H1 (cell line): ENCODE measurements at regions of chr5 and their contacts with region 1.

Region 1: GRCh38 chr5:149834246-149834855 is 104.2 kb downstream of the PPARGC1B start:
- DNase-seq: peak; percentile 25 to 58
- H3K4me3 ChIP-seq: no peak overlapping the region
- H3K27ac ChIP-seq: no peak overlapping the region
- H3K4me1 ChIP-seq: no peaks in the 10 kb centered on the region
- H3K27me3 ChIP-seq: no peaks in the 10 kb centered on the region
- CTCF ChIP-seq: peak; percentile 35 to 91 (median 73)
- EP300 ChIP-seq: no peak
- POLR2A ChIP-seq: no peak
- RAD21 ChIP-seq: peak; percentile 79

Region 2: DNA sequence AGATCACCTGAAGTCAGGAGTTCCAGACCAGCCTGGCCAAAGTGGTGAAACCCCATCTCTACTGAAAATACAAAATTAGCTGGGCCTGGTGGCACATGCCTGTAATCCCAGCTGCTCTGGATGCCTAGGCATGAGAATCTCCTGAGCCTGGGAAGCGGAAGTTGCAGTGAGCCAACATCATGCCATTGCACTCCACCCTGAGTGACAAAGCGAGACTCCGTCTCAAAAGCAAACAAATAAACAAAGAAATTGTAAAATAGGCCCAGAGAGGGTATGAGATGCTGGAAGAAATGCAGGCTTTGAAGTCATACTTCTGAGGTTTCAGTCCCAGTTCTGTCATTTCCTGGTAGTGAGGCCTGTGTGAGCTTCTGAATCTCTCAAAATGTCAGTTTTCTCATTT is 258.3 kb before region 1 on chr5:
- CTCF ChIA-PET with region 1: no interaction called
- POLR2A ChIA-PET with region 1: no interaction called
- DNase-seq: no peak
- H3K4me3 ChIP-seq: no peak overlapping the region
- H3K27ac ChIP-seq: no peak overlapping the region
- H3K4me1 ChIP-seq: peaks cover 0 to 4% (median 1%) of the 10 kb centered on the region in 4 experiments; a peak in 3 of 7 replicates
- H3K27me3 ChIP-seq: peaks cover 0 to 10% (median 7%) of the 10 kb centered on the region in 4 experiments; a peak in 5 of 7 replicates
- CTCF ChIP-seq: no peak
- EP300 ChIP-seq: no peak
- POLR2A ChIP-seq: no peak
- RAD21 ChIP-seq: no peak

Region 3: GRCh38 chr5:149667084-149667828 is 167.1 kb before region 1 on chr5:
- CTCF ChIA-PET with region 1: interaction called, 11 read pairs
- POLR2A ChIA-PET with region 1: no interaction called
- DNase-seq: peak in 1 of 2 experiments; percentile 77
- H3K4me3 ChIP-seq: no peak overlapping the region
- H3K27ac ChIP-seq: no peak overlapping the region
- H3K4me1 ChIP-seq: no peaks in the 10 kb centered on the region
- H3K27me3 ChIP-seq: no peaks in the 10 kb centered on the region
- CTCF ChIP-seq: peak; percentile 62 to 87 (median 73)
- EP300 ChIP-seq: no peak
- POLR2A ChIP-seq: no peak
- RAD21 ChIP-seq: peak; percentile 64 to 77

Region 4: DNA sequence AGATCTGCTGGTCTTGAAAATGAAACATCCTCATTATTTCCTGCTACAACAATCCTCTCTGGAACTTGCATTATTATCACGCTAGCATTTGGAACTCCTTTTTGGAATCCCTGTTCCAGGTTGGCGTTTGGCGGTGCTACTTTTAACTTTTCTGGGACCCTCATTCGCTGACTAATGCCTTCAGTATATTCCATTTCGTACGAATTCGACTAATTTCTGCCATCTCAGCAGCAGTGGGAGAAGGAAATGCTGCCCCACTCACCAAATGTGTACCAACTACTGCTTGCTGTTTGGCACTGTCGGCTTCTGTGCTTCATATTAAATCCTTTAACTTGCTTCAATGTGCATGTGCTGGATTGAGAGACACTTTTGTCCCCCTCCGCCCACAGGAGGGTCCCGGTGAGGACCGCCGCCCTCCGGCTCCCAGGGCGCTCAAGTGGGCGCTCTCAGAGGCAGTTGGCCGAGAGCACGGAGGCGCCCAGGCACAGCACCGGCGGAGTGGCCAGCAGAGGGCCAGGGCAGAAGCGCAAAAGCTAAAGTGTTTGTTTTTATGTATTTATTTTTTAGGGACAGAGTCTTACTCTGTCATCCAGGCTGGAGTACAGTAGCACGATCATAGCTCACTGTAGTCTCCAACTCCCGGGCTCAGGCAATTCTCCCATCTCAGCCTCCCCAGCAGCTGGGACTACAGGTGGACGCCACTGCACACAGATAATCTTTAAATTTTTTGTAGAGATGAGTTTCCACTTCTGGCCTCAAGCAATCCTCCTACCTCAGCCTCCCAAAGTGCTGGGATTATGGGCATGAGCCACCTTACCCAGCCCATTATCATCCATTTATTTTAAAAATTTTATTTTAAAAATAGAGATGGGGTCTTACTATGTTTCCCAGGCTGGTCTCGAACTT is 98.3 kb after region 1 on chr5:
- CTCF ChIA-PET with region 1: interaction called, 12 read pairs
- POLR2A ChIA-PET with region 1: no interaction called
- DNase-seq: peak in 1 of 2 experiments; percentile 72
- H3K4me3 ChIP-seq: no peak overlapping the region
- H3K27ac ChIP-seq: no peak overlapping the region
- H3K4me1 ChIP-seq: peaks cover 0 to 3% (median 0%) of the 10 kb centered on the region in 4 experiments; a peak in 1 of 7 replicates
- H3K27me3 ChIP-seq: no peaks in the 10 kb centered on the region; a peak in 2 of 7 replicates
- CTCF ChIP-seq: peak; percentile 60 to 75 (median 67)
- EP300 ChIP-seq: no peak
- POLR2A ChIP-seq: no peak
- RAD21 ChIP-seq: peak; percentile 22 to 49

Region 5: GRCh38 chr5:149960272-149961185 is 126.2 kb after region 1 on chr5 and contains the start of gene SLC26A2:
- CTCF ChIA-PET with region 1: interaction called, 112 read pairs
- POLR2A ChIA-PET with region 1: interaction called, 3 read pairs
- DNase-seq: peak; percentile 92 to 94
- H3K4me3 ChIP-seq: peak within 1 kb of the TSS; percentile 72 to 87 (median 80)
- H3K27ac ChIP-seq: peak within 1 kb of the TSS; percentile 26; the same call in 1 of the 2 replicates
- H3K4me1 ChIP-seq: peaks cover 0 to 8% (median 5%) of the 10 kb centered on the region in 4 experiments; a peak in 4 of 7 replicates
- H3K27me3 ChIP-seq: peaks cover 0 to 5% (median 1%) of the 10 kb centered on the region in 4 experiments; a peak in 3 of 7 replicates
- CTCF ChIP-seq: no peak
- EP300 ChIP-seq: no peak
- POLR2A ChIP-seq: peak; percentile 70 to 92
- RAD21 ChIP-seq: no peak
- total RNA-seq, gene SLC26A2: 10.9 and 11.4 TPM in 2 replicates

Region 6: GRCh38 chr5:149979896-149980295 is 145.5 kb after region 1 on chr5:
- CTCF ChIA-PET with region 1: interaction called, 10 read pairs
- POLR2A ChIA-PET with region 1: no interaction called
- DNase-seq: no peak
- H3K4me3 ChIP-seq: no peak overlapping the region
- H3K27ac ChIP-seq: no peak overlapping the region
- H3K4me1 ChIP-seq: no peaks in the 10 kb centered on the region
- H3K27me3 ChIP-seq: no peaks in the 10 kb centered on the region
- CTCF ChIP-seq: no peak
- EP300 ChIP-seq: no peak
- POLR2A ChIP-seq: no peak
- RAD21 ChIP-seq: no peak

Region 7: DNA sequence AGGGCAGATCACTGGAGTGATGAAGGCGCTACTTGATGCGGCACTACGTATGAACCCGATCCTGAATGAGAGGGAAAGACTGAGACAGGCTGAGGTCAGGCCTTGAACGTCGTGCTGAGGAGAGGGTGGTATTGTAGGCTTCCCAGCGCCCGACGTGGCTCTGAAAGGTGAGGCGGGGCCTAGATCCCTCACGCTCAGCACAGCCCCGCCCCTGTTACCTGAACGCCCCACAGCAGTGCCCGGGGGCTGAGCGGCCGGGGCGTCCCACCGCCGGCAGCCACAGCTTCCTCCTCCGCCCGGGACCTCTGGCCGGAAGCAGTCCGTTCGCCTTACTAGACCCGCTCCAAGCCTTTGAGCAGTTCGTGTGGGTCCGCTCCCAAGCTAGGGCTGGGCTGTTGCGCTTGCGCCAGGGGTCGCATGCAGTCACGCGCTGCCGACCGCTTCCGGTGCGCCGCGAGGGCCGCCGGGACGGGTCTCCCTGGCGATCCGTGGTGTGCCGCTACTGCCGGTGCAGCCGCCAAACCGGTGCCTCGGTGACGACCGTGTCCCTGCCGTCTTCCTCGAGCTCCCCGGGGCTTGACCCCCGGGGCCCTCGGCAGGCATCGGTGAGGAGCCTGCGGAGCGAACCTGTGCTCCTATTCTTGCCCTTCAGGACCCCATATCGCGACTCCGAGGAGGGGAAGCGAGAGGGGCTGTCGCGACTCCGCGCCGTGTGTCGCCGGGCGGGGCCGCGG is 166.1 kb after region 1 on chr5 and contains the starts of genes HMGXB3 and TIGD6:
- CTCF ChIA-PET with region 1: interaction called, 172 read pairs
- POLR2A ChIA-PET with region 1: no interaction called
- DNase-seq: peak; percentile 90 to 93
- H3K4me3 ChIP-seq: peak within 1 kb of the TSS; percentile 54 to 92 (median 89)
- H3K27ac ChIP-seq: peak within 1 kb of the TSS; percentile 95
- H3K4me1 ChIP-seq: peaks cover 0 to 4% (median 2%) of the 10 kb centered on the region in 4 experiments; a peak in 4 of 7 replicates
- H3K27me3 ChIP-seq: no peaks in the 10 kb centered on the region
- CTCF ChIP-seq: no peak
- EP300 ChIP-seq: no peak; a peak in 1 of 3 replicates
- POLR2A ChIP-seq: peak; percentile 69 to 93
- RAD21 ChIP-seq: no peak
- total RNA-seq, gene HMGXB3: 27.5 and 28.0 TPM in 2 replicates
- total RNA-seq, gene TIGD6: 1.2 and 1.3 TPM in 2 replicates